ENCODE measurements at regions of chr5 and their contacts with region 1.

Region 1: DNA sequence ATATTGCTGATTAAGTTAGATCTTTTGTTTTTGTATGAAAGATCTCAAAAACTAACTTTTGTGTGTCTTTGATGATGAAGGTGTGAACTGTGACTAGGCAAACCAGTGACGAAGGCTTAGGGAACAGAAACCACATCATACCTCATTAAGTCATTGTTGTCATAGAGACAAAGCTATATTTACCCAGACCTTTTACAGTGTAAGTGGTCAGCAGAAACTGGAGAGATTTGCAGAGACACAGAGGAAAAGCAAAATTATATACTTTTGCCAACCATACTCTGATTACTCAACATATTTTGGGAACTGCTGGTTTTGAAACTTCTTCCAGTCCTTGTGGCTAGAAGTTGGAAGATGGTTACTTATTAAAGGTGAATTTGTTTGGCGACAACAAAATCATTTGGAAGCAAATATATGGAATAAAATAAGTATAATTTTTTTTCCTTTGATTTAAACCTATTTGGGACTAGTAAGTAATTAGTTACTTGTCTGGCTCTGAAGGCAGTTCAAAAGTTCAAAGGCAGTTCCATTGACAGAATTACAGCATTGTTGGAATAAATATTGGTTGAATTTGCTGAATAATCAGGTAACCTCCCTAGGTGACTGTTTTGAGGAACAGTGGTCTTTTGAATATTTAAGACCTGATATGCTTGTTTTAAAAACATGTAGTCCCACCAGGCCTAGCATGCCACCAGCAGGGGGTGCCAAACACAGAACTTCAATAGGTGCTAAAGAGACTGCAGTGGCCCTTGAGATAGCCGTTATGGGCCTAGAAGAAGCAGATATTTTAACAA is 103.8 kb downstream of the RPS23 start:
- DNase-seq: peak; percentile 29
- H3K4me3 ChIP-seq: no peak overlapping the region
- H3K27me3 ChIP-seq: no peaks in the 10 kb centered on the region
- CTCF ChIP-seq: peak; percentile 59

Region 2: DNA sequence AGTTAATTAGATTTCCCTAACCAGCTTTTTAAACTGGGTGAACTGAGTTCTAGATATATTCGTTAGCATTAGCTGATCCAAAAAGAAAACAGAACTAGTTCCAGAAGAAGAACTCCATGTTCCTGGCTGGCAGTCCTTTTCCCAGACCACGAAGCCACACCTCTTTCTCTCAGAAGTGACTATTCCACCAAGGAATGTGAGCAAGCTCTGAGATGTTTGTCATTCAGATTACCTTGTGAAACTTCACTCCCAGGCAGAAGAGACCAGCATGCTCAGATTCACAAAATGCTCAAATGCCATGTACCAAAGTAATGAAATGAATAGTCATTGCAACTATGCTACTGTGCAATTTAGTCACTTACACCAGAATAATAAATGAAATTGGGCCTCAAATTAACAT is 419.0 kb before region 1 on chr5:
- CTCF ChIA-PET with region 1: no interaction called
- POLR2A ChIA-PET with region 1: no interaction called
- DNase-seq: peak; percentile 69
- H3K4me3 ChIP-seq: no peak overlapping the region
- H3K27me3 ChIP-seq: no peaks in the 10 kb centered on the region
- CTCF ChIP-seq: no peak

Region 3: DNA sequence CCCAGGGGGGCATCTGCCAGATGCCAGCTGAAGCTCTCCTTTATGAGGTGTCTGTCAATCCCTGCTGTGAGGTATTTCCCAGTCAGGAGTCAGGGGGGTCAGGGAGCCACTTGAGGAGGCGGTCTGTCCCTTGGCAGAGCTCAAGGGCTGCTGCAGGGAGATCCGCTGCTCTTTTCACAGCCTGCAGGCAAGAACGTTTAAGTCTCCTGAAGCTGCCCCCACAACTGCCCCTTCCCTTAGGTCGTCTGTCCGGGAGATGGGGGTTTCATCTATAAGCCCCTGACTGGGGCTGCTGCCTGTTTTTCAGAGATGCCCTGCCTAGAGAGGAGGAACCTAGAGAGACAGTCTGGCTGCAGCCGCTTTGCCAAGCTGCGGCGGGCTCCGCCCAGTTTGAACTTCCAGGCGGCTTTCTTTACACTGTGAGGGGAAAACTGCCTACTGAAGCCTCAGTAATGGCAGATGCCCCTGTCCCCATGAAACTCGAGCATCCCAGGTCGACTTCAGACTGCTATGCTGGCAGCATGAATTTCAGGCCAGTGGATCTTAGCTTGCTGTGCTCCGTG is 44.5 kb before region 1 on chr5:
- CTCF ChIA-PET with region 1: no interaction called
- POLR2A ChIA-PET with region 1: no interaction called
- DNase-seq: no peak
- H3K4me3 ChIP-seq: no peak overlapping the region
- H3K27me3 ChIP-seq: no peaks in the 10 kb centered on the region
- CTCF ChIP-seq: no peak

Region 4: GRCh38 chr5:82185851-82186250 is 11.5 kb after region 1 on chr5:
- CTCF ChIA-PET with region 1: no interaction called
- POLR2A ChIA-PET with region 1: no interaction called
- DNase-seq: no peak
- H3K4me3 ChIP-seq: no peak overlapping the region
- H3K27me3 ChIP-seq: no peaks in the 10 kb centered on the region
- CTCF ChIP-seq: no peak

Region 5: GRCh38 chr5:82208371-82208770 is 34.0 kb after region 1 on chr5:
- CTCF ChIA-PET with region 1: no interaction called
- POLR2A ChIA-PET with region 1: no interaction called
- DNase-seq: no peak
- H3K4me3 ChIP-seq: no peak overlapping the region
- H3K27me3 ChIP-seq: no peaks in the 10 kb centered on the region
- CTCF ChIP-seq: no peak

Region 6: GRCh38 chr5:82225525-82226172 is 51.3 kb after region 1 on chr5:
- CTCF ChIA-PET with region 1: interaction called, 10 read pairs
- POLR2A ChIA-PET with region 1: no interaction called
- DNase-seq: no peak
- H3K4me3 ChIP-seq: no peak overlapping the region
- H3K27me3 ChIP-seq: no peaks in the 10 kb centered on the region
- CTCF ChIP-seq: peak; percentile 79

Measured in BJ (cell line).